Caco-2 (cell line): ENCODE measurements at regions of chr4 and their contacts with region 1.

Region 1: GRCh38 chr4:56323327-56323726 is 64.0 kb downstream of the AASDH start:
- DNase-seq: no peak
- H3K4me3 ChIP-seq: no peak overlapping the region
- H3K4me3 Mint-ChIP-seq: no peak overlapping the region
- H3K27ac Mint-ChIP-seq: no peak overlapping the region
- H3K4me1 ChIP-seq: 0 out of 2 replicates have a peak, but pooled peaks cover 8% of the 10 kb centered on the region
- H3K4me1 Mint-ChIP-seq: no peaks in the 10 kb centered on the region
- H3K27me3 ChIP-seq: no peaks in the 10 kb centered on the region
- H3K27me3 Mint-ChIP-seq: no peaks in the 10 kb centered on the region
- CTCF ChIP-seq: no peak

Region 2: DNA sequence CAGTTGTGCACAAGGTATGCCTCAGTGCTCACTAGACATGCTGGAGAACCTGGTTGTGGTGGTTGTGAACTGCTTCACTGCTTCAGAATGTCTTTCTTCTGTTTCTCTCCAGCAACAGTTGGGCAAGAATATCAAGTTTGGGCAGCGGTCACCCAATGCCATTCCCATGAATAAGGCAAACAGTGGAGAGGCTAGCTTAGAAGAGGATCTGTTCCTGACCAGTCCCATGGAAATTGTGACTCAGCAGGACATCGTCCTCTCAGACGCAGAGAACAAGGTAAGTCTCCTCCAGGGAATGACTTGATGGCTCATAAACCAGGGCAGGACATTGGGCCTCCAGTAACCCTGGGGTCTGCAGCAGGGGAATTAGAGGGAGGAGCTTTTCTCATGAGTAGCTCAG is 15.9 kb before region 1 on chr4:
- CTCF ChIA-PET with region 1: no interaction called
- POLR2A ChIA-PET with region 1: no interaction called
- intact Hi-C with region 1: loop called (anchors 1 kb)
- DNase-seq: no peak
- H3K4me3 ChIP-seq: no peak overlapping the region
- H3K4me3 Mint-ChIP-seq: no peak overlapping the region
- H3K27ac Mint-ChIP-seq: no peak overlapping the region
- H3K4me1 ChIP-seq: peaks cover 29% of the 10 kb centered on the region
- H3K4me1 Mint-ChIP-seq: peaks cover 15% of the 10 kb centered on the region
- H3K27me3 ChIP-seq: no peaks in the 10 kb centered on the region
- H3K27me3 Mint-ChIP-seq: no peaks in the 10 kb centered on the region
- CTCF ChIP-seq: no peak

Region 3: GRCh38 chr4:56372774-56373173 is 49.4 kb after region 1 on chr4:
- CTCF ChIA-PET with region 1: no interaction called
- POLR2A ChIA-PET with region 1: no interaction called
- intact Hi-C with region 1: no loop called
- DNase-seq: no peak
- H3K4me3 ChIP-seq: no peak overlapping the region
- H3K4me3 Mint-ChIP-seq: no peak overlapping the region
- H3K27ac Mint-ChIP-seq: no peak overlapping the region
- H3K4me1 ChIP-seq: no peaks in the 10 kb centered on the region
- H3K4me1 Mint-ChIP-seq: no peaks in the 10 kb centered on the region
- H3K27me3 ChIP-seq: no peaks in the 10 kb centered on the region
- H3K27me3 Mint-ChIP-seq: no peaks in the 10 kb centered on the region
- CTCF ChIP-seq: no peak

Region 4: GRCh38 chr4:56435306-56435926 is 112.1 kb after region 1 on chr4 and contains the start of gene PPAT:
- CTCF ChIA-PET with region 1: no interaction called
- POLR2A ChIA-PET with region 1: no interaction called
- intact Hi-C with region 1: no loop called
- DNase-seq: peak; percentile 98
- H3K4me3 ChIP-seq: peak within 1 kb of the TSS; percentile 87
- H3K4me3 Mint-ChIP-seq: peak within 1 kb of the TSS; percentile 98
- H3K27ac Mint-ChIP-seq: peak within 1 kb of the TSS; percentile 96
- H3K4me1 ChIP-seq: no peaks in the 10 kb centered on the region
- H3K4me1 Mint-ChIP-seq: peaks cover 11% of the 10 kb centered on the region
- H3K27me3 ChIP-seq: no peaks in the 10 kb centered on the region
- H3K27me3 Mint-ChIP-seq: no peaks in the 10 kb centered on the region
- CTCF ChIP-seq: peak in 1 of 2 experiments; percentile 14
- total RNA-seq, gene PPAT: 55.6 and 60.7 TPM in 2 replicates